GM12878 (cell line): ENCODE measurements at regions of chr16 and their contacts with region 1.

Region 1: GRCh38 chr16:28943281-28943680 is 7.5 kb upstream of the NFATC2IP start:
- DNase-seq: no peak
- ATAC-seq: no peak
- H3K4me3 ChIP-seq: no peak overlapping the region
- H3K27ac ChIP-seq: no peak overlapping the region
- H3K4me1 ChIP-seq: peaks cover 10% of the 10 kb centered on the region
- H3K27me3 ChIP-seq: no peaks in the 10 kb centered on the region
- CTCF ChIP-seq: no peak
- EP300 ChIP-seq: no peak
- POLR2A ChIP-seq: no peak
- RAD21 ChIP-seq: no peak

Region 2: GRCh38 chr16:28823872-28824716 is 119.2 kb before region 1 on chr16:
- CTCF ChIA-PET with region 1: interaction called, 12 read pairs
- POLR2A ChIA-PET with region 1: interaction called, 3 read pairs
- RAD21 ChIA-PET with region 1: interaction called, 4 read pairs
- SMC1A ChIA-PET with region 1: interaction called, 5 read pairs
- in situ Hi-C with region 1: no loop called
- intact Hi-C with region 1: loop called (anchors 5 kb)
- DNase-seq: peak; percentile 86
- ATAC-seq: peak; percentile 90
- H3K4me3 ChIP-seq: peak overlapping the region; percentile 73
- H3K27ac ChIP-seq: peak overlapping the region; percentile 97
- H3K4me1 ChIP-seq: peaks cover 8% of the 10 kb centered on the region; the same call in 1 of the 2 replicates
- H3K27me3 ChIP-seq: no peaks in the 10 kb centered on the region
- CTCF ChIP-seq: 0 out of 6 replicates have a peak, but pooled peaks of 1 of the 3 experiments have one; percentile 13
- EP300 ChIP-seq: no peak
- POLR2A ChIP-seq: peak; percentile 66
- RAD21 ChIP-seq: no peak

Region 3: GRCh38 chr16:28863929-28864793 is 79.1 kb before region 1 on chr16:
- CTCF ChIA-PET with region 1: interaction called, 124 read pairs
- POLR2A ChIA-PET with region 1: interaction called, 6 read pairs
- RAD21 ChIA-PET with region 1: interaction called, 25 read pairs
- SMC1A ChIA-PET with region 1: interaction called, 32 read pairs
- in situ Hi-C with region 1: no loop called
- intact Hi-C with region 1: no loop called
- DNase-seq: no peak
- ATAC-seq: peak; percentile 19
- H3K4me3 ChIP-seq: peak overlapping the region; percentile 78
- H3K27ac ChIP-seq: peak overlapping the region; percentile 99
- H3K4me1 ChIP-seq: peaks cover 10% of the 10 kb centered on the region
- H3K27me3 ChIP-seq: no peaks in the 10 kb centered on the region
- CTCF ChIP-seq: no peak
- EP300 ChIP-seq: no peak
- POLR2A ChIP-seq: no peak
- RAD21 ChIP-seq: no peak

Region 4: DNA sequence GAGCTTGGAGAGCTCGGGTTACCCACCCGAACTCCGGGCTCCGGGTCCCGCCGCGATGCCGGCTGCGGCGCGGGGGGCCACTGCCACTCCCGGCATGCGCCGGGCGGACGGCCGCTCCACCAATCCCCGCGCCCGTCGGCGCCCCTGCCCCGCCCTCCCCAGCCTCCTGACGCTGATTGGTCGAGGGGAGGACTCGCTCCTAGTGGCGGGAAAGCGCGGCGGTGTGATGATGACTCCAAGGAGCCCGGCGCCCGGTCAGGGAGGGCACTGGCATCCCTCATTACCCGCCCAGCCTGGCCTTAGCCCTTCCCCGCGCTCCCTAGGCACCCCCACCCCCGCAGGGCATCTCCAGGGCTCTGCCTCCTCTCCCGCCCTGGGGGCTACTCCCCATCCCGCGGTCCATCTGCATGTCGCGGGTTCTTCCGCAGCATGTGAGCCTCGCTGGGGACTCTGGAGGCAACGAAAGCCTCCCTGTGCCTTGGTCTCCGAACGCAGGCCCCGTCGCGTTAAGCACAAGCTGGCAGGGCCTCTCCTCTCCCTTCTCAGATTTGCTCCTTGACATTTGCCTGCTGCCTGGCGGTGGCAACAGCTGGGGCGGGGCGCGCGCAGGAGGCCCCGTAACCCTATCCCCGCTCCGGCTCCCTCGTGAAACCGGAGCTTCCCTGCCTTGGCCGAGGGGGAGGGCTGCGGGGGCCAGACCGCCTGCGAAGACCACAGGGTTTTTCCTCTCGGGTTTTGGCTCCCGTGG is 63.3 kb before region 1 on chr16:
- CTCF ChIA-PET with region 1: interaction called, 124 read pairs
- POLR2A ChIA-PET with region 1: interaction called, 8 read pairs
- RAD21 ChIA-PET with region 1: interaction called, 53 read pairs
- SMC1A ChIA-PET with region 1: interaction called, 38 read pairs
- in situ Hi-C with region 1: no loop called
- intact Hi-C with region 1: no loop called
- DNase-seq: peak; percentile 46
- ATAC-seq: peak; percentile 96
- H3K4me3 ChIP-seq: peak overlapping the region; percentile 95
- H3K27ac ChIP-seq: peak overlapping the region; percentile 37; the same call in 1 of the 2 replicates
- H3K4me1 ChIP-seq: peaks cover 13% of the 10 kb centered on the region
- H3K27me3 ChIP-seq: no peaks in the 10 kb centered on the region
- CTCF ChIP-seq: no peak
- EP300 ChIP-seq: no peak
- POLR2A ChIP-seq: peak; percentile 64
- RAD21 ChIP-seq: no peak

Region 5: GRCh38 chr16:28917095-28917494 is 26.2 kb before region 1 on chr16:
- CTCF ChIA-PET with region 1: interaction called, 76 read pairs
- POLR2A ChIA-PET with region 1: interaction called, 21 read pairs
- RAD21 ChIA-PET with region 1: interaction called, 10 read pairs
- SMC1A ChIA-PET with region 1: interaction called, 58 read pairs
- in situ Hi-C with region 1: no loop called
- intact Hi-C with region 1: no loop called
- DNase-seq: no peak
- ATAC-seq: no peak
- H3K4me3 ChIP-seq: no peak overlapping the region
- H3K27ac ChIP-seq: no peak overlapping the region
- H3K4me1 ChIP-seq: no peaks in the 10 kb centered on the region
- H3K27me3 ChIP-seq: no peaks in the 10 kb centered on the region
- CTCF ChIP-seq: no peak
- EP300 ChIP-seq: no peak
- POLR2A ChIP-seq: no peak
- RAD21 ChIP-seq: no peak

Region 6: GRCh38 chr16:28930652-28931051 is 12.6 kb before region 1 on chr16:
- CTCF ChIA-PET with region 1: interaction called, 136 read pairs
- POLR2A ChIA-PET with region 1: interaction called, 21 read pairs
- RAD21 ChIA-PET with region 1: interaction called, 46 read pairs
- SMC1A ChIA-PET with region 1: interaction called, 58 read pairs
- in situ Hi-C with region 1: no loop called
- intact Hi-C with region 1: loop called (anchors 2 kb)
- DNase-seq: peak; percentile 86
- ATAC-seq: peak; percentile 65
- H3K4me3 ChIP-seq: no peak overlapping the region
- H3K27ac ChIP-seq: peak overlapping the region; percentile 92
- H3K4me1 ChIP-seq: peaks cover 16% of the 10 kb centered on the region
- H3K27me3 ChIP-seq: no peaks in the 10 kb centered on the region
- CTCF ChIP-seq: no peak
- EP300 ChIP-seq: peak in 1 of 2 experiments; percentile 37; a peak in 1 of 4 replicates
- POLR2A ChIP-seq: peak; percentile 23; the same call in 1 of the 2 replicates
- RAD21 ChIP-seq: no peak

Region 7: GRCh38 chr16:29023279-29024277 is 80.3 kb after region 1 on chr16:
- CTCF ChIA-PET with region 1: no interaction called
- POLR2A ChIA-PET with region 1: no interaction called
- RAD21 ChIA-PET with region 1: no interaction called
- SMC1A ChIA-PET with region 1: no interaction called
- in situ Hi-C with region 1: no loop called
- intact Hi-C with region 1: no loop called
- DNase-seq: no peak
- ATAC-seq: no peak
- H3K4me3 ChIP-seq: no peak overlapping the region
- H3K27ac ChIP-seq: no peak overlapping the region
- H3K4me1 ChIP-seq: peaks cover 1% of the 10 kb centered on the region; the same call in 1 of the 2 replicates
- H3K27me3 ChIP-seq: peaks cover 0 to 3% of the 10 kb centered on the region in 2 experiments; a peak in 1 of 4 replicates
- CTCF ChIP-seq: no peak
- EP300 ChIP-seq: no peak
- POLR2A ChIP-seq: no peak
- RAD21 ChIP-seq: no peak